Activated naive CD4-positive, alpha-beta T cell treated with anti-CD3 and anti-CD28 coated beads, Interleukin-2, amount 10 ng/mL, durations not matched to agents 7 days and 5 days (primary cell): ENCODE measurements at regions of chr17 and their contacts with region 1.

Region 1: GRCh38 chr17:48307814-48308411 is 122.1 kb downstream of the SKAP1 start:
- DNase-seq: peak; percentile 66
- H3K4me3 Mint-ChIP-seq: no peak overlapping the region
- H3K27ac Mint-ChIP-seq: no peak overlapping the region
- H3K4me1 Mint-ChIP-seq: peaks cover 2% of the 10 kb centered on the region
- H3K27me3 Mint-ChIP-seq: no peaks in the 10 kb centered on the region

Region 2: GRCh38 chr17:48259694-48260291 is 48.1 kb before region 1 on chr17:
- CTCF ChIA-PET with region 1: interaction called, 11 read pairs
- DNase-seq: no peak
- H3K4me3 Mint-ChIP-seq: no peak overlapping the region
- H3K27ac Mint-ChIP-seq: no peak overlapping the region
- H3K4me1 Mint-ChIP-seq: no peaks in the 10 kb centered on the region
- H3K27me3 Mint-ChIP-seq: no peaks in the 10 kb centered on the region

Region 3: DNA sequence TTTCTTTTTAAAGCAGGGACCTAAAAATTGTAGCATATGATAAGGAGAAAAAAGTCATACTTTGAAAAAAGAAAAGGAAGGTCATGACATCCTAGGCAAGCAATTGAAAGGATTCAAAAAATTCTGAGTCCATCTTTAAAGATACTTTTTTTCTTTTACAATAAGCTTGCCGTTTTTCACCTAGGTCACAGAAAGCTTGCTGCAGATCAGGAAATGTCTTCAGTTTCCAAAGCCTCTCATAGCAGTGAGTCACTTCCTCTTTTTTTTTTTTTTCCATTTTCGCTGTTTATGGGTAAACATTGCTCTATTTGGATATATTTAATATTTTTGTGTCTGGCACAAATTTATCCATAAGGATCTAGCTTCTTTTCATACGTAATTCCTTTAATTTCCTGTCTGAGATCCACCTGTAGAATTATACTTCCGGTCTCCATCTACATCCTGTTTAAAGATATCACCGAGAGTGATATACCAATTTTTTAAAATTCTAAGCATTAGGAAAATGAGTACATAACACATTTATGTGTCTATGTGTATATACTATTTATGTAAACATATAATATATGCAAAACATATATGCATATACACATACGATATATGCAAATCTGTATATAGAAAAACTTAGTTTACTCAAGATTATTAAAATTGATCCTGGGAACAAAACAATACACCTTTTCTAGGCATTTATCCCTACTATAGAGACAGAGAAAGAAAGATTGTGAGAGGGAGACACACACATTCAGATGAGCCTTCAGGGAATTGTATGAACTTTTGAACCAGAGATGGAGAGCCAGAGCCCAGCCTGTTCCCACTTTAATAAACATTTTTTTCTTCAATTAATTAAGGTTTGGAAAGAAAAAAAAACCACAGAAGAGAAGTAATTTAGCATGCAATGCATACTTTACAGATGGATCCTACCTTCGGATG is 12.3 kb before region 1 on chr17:
- CTCF ChIA-PET with region 1: interaction called, 12 read pairs
- DNase-seq: no peak
- H3K4me3 Mint-ChIP-seq: peak overlapping the region; percentile 65
- H3K27ac Mint-ChIP-seq: peak overlapping the region; percentile 90
- H3K4me1 Mint-ChIP-seq: peaks cover 56% of the 10 kb centered on the region
- H3K27me3 Mint-ChIP-seq: no peaks in the 10 kb centered on the region

Region 4: DNA sequence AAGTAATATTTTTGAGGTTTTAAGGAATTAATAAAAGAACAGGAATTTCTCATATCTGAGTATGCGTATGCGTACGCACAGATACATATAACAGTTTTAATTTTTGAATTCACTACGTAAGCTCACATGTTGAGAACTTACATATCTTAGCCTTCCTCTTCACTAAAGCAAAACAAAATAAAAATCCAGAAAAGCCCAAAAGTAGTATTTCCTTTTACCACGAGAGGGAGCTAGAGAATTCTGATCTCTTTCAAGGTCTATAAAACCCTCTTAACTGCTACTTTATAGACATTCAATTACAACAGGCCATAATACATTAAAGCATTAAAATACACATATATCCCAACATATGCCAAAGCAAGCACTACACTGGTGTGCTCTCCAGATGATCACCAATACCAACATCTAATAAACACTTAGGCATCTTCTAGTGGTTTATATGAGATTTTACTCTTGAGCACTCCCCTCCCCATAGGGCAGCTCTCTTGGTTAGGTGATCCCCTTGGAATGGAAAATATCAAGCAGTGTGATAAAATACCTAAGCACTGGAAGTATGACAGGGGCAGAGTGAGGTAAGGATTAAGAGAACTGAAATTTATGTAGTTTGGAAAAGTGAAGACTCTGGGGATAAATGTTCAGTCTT is 28.1 kb after region 1 on chr17:
- CTCF ChIA-PET with region 1: interaction called, 11 read pairs
- DNase-seq: no peak
- H3K4me3 Mint-ChIP-seq: no peak overlapping the region
- H3K27ac Mint-ChIP-seq: no peak overlapping the region
- H3K4me1 Mint-ChIP-seq: peaks cover 5% of the 10 kb centered on the region
- H3K27me3 Mint-ChIP-seq: no peaks in the 10 kb centered on the region

Region 5: DNA sequence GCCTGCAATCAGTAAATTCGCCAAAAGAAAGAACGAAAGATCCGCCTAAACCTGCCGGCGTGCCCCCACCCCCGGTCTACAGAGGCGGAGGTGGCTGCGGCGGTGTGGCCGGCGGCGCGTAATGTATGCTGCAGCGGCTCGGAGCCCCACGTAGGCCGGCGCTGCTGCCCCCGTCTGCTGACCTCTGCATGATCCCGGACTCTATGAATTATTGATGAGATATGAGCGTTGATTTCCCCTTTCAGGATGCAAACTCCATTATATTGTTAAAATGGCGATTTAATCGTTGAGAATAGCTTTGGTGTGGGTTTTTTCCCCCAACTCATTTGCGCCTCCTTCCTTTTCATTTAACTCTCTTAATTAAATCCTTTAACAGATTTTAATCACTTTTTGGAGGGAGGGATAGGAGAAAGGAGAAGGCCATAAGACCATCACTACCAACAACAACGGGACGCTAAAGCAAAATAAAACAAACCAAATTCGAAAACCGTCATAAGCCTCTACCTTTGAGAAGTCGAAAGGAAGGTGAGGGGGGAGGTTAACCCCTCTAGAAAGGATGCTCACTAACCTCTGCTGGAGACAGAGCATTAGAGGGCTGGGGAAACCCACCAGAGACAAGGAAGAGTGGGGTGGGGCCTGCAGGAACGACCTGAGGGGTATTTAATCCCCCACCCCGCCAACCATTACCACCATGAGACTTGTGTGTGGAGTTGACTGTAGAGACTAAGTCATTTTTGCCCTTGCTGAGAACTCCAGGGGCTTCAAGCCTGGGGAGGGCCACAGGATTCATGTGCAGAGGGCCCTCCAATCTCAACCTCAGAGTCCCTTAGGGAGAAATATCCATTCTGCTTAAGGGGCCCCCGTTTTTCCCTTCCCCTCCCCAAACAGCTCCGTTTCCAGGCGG is 278.7 kb after region 1 on chr17:
- CTCF ChIA-PET with region 1: interaction called, 21 read pairs
- DNase-seq: peak; percentile 53
- H3K4me3 Mint-ChIP-seq: peak overlapping the region; percentile 79
- H3K27ac Mint-ChIP-seq: no peak overlapping the region
- H3K4me1 Mint-ChIP-seq: peaks cover 64% of the 10 kb centered on the region
- H3K27me3 Mint-ChIP-seq: peaks cover 100% of the 10 kb centered on the region